ENCODE measurements at regions of chr20 and their contacts with region 1.

Region 1: DNA sequence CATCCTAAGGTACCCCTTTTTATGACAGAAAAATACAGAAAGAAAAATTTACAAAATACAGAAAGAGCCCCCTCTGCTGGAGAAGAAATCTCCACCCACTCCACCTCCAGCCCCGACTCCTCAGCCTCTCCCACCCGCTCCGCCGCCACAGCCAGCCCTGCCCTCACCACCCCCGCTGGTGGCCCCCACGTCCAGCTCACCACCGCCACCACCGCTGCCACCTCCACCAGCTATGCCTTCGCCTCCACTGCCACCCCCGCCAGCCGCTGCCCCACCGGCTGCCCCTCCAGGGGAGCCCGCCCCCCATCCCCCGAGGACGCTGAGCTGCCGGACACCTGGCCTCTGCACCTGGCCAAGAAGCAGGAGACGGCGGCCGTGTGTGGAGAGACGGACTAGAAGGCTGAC is 17.7 kb downstream of the WFDC2 start:
- DNase-seq: peak; percentile 58
- ATAC-seq: peak; percentile 82
- H3K4me3 Mint-ChIP-seq: peak overlapping the region; percentile 63
- H3K27ac Mint-ChIP-seq: no peak overlapping the region
- H3K4me1 Mint-ChIP-seq: peaks cover 34% of the 10 kb centered on the region
- H3K27me3 Mint-ChIP-seq: no peaks in the 10 kb centered on the region
- CTCF ChIP-seq: peak; percentile 55

Region 2: GRCh38 chr20:45459606-45460005 is 27.6 kb before region 1 on chr20:
- CTCF ChIA-PET with region 1: interaction called, 14 read pairs
- POLR2A ChIA-PET with region 1: interaction called, 4 read pairs
- DNase-seq: no peak
- ATAC-seq: no peak
- H3K4me3 Mint-ChIP-seq: no peak overlapping the region
- H3K27ac Mint-ChIP-seq: no peak overlapping the region
- H3K4me1 Mint-ChIP-seq: no peaks in the 10 kb centered on the region; the same call in 1 of the 2 replicates
- H3K27me3 Mint-ChIP-seq: no peaks in the 10 kb centered on the region
- CTCF ChIP-seq: no peak

Region 3: GRCh38 chr20:45470262-45470931 is 16.8 kb before region 1 on chr20:
- CTCF ChIA-PET with region 1: interaction called, 12 read pairs
- POLR2A ChIA-PET with region 1: interaction called, 3 read pairs
- DNase-seq: peak; percentile 69
- ATAC-seq: peak; percentile 63
- H3K4me3 Mint-ChIP-seq: peak overlapping the region; percentile 77
- H3K27ac Mint-ChIP-seq: peak overlapping the region; percentile 92
- H3K4me1 Mint-ChIP-seq: peaks cover 45% of the 10 kb centered on the region
- H3K27me3 Mint-ChIP-seq: peaks cover 7% of the 10 kb centered on the region
- CTCF ChIP-seq: no peak

Region 4: DNA sequence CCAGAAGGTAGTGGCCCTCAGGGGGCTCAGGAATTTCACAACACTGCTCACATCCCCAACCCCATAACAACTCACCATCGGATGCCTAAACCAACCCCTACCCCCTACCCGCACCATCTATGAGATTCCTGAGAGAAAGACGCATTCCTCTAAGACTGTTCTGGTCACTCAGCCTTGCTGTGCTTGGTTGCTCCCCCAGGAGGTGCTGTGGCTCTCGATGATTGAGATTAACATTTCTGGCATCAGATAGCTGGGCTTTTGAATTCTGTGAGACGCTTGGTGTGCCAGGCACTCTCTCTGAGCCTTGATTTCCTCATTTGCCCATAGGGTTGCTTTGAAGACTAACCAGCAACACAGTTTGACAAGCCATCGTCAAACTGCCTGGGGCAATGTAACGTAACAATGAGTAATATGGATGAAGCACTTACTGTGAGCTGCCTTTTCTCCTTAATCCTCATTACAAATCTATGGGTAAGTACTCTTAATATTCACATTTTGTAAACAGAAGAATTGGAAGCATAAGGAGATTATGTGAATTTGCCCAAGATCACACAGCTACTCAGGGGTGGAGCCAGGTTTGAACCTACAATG is 51.1 kb after region 1 on chr20:
- CTCF ChIA-PET with region 1: interaction called, 11 read pairs
- POLR2A ChIA-PET with region 1: no interaction called
- DNase-seq: peak; percentile 60
- ATAC-seq: peak; percentile 89
- H3K4me3 Mint-ChIP-seq: no peak overlapping the region
- H3K27ac Mint-ChIP-seq: no peak overlapping the region
- H3K4me1 Mint-ChIP-seq: peaks cover 6% of the 10 kb centered on the region
- H3K27me3 Mint-ChIP-seq: no peaks in the 10 kb centered on the region
- CTCF ChIP-seq: no peak

Region 5: DNA sequence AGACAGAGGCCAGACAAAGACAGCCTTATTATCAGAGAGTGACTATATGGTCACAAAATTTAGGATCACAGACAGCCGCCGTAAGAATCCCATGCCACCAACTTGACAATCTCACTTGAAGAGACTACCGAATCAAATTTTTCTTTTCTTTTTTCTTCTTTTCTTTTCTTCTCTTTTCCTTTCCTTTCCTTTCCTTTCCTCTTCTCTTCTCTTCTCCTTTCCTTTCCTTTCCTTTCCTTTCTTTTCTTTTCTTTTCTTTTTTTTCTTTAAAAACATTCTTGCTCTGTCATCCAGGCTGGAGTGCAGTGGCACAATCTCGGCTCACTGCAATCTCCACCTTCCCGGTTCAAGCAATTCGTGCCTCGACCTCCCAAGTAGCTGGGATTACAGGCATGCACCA is 61.2 kb after region 1 on chr20:
- CTCF ChIA-PET with region 1: no interaction called
- POLR2A ChIA-PET with region 1: no interaction called
- DNase-seq: no peak
- ATAC-seq: no peak
- H3K4me3 Mint-ChIP-seq: no peak overlapping the region
- H3K27ac Mint-ChIP-seq: no peak overlapping the region
- H3K4me1 Mint-ChIP-seq: peaks cover 13% of the 10 kb centered on the region
- H3K27me3 Mint-ChIP-seq: no peaks in the 10 kb centered on the region; the same call in 1 of the 2 replicates
- CTCF ChIP-seq: no peak